Panc1 (cell line): ENCODE measurements at regions of chr17 and their contacts with region 1.

Region 1: DNA sequence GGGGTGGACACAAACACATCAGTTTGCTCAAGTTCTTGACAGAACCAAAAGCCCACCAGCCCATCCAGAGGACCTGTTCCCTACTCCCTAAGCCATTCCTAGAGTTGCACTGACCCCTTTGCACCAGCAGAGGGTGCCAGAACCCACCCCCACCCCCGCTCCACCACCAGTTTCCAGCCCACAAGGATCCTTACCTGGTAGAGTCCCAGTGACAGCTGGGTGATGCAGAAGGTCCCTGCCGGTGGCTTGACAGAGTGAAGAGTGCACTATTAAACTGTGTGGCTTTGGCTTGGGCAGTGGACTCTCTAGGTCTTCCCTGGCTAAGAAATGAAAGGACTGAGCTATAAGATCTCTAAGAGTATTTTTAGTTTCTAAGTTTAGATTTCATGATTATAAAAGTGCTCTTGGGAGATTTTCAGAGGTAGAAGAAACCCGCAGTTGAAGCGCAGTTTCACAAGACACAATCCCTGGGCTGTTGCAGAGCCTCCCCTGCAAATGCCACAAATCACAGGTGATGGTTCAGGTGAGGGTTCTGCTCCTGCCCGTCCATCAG is 73.3 kb upstream of the MTMR4 start:
- DNase-seq: peak; percentile 41
- ATAC-seq: peak; percentile 82
- H3K4me3 ChIP-seq: no peak overlapping the region
- H3K27ac ChIP-seq: no peak overlapping the region
- H3K4me1 ChIP-seq: no peaks in the 10 kb centered on the region
- H3K27me3 ChIP-seq: no peaks in the 10 kb centered on the region; the same call in 1 of the 2 replicates
- CTCF ChIP-seq: peak; percentile 91

Region 2: GRCh38 chr17:58534901-58535421 is 52.8 kb before region 1 on chr17:
- CTCF ChIA-PET with region 1: no interaction called
- POLR2A ChIA-PET with region 1: interaction called, 11 read pairs
- in situ Hi-C with region 1: no loop called
- intact Hi-C with region 1: no loop called
- DNase-seq: no peak
- ATAC-seq: no peak
- H3K4me3 ChIP-seq: no peak overlapping the region
- H3K27ac ChIP-seq: no peak overlapping the region
- H3K4me1 ChIP-seq: peaks cover 3% of the 10 kb centered on the region; the same call in 1 of the 2 replicates
- H3K27me3 ChIP-seq: no peaks in the 10 kb centered on the region
- CTCF ChIP-seq: no peak

Region 3: GRCh38 chr17:58679263-58680037 is 91.7 kb after region 1 on chr17:
- CTCF ChIA-PET with region 1: no interaction called
- POLR2A ChIA-PET with region 1: no interaction called
- in situ Hi-C with region 1: no loop called
- intact Hi-C with region 1: no loop called
- DNase-seq: peak; percentile 75
- ATAC-seq: peak; percentile 91
- H3K4me3 ChIP-seq: no peak overlapping the region
- H3K27ac ChIP-seq: peak overlapping the region; percentile 54; the same call in 1 of the 2 replicates
- H3K4me1 ChIP-seq: peaks cover 9% of the 10 kb centered on the region; the same call in 1 of the 2 replicates
- H3K27me3 ChIP-seq: no peaks in the 10 kb centered on the region
- CTCF ChIP-seq: no peak

Region 4: GRCh38 chr17:58780677-58781076 is 192.9 kb after region 1 on chr17:
- CTCF ChIA-PET with region 1: no interaction called
- POLR2A ChIA-PET with region 1: interaction called, 12 read pairs
- in situ Hi-C with region 1: no loop called
- intact Hi-C with region 1: no loop called
- DNase-seq: no peak
- ATAC-seq: no peak
- H3K4me3 ChIP-seq: no peak overlapping the region
- H3K27ac ChIP-seq: no peak overlapping the region
- H3K4me1 ChIP-seq: no peaks in the 10 kb centered on the region
- H3K27me3 ChIP-seq: no peaks in the 10 kb centered on the region
- CTCF ChIP-seq: no peak

Region 5: DNA sequence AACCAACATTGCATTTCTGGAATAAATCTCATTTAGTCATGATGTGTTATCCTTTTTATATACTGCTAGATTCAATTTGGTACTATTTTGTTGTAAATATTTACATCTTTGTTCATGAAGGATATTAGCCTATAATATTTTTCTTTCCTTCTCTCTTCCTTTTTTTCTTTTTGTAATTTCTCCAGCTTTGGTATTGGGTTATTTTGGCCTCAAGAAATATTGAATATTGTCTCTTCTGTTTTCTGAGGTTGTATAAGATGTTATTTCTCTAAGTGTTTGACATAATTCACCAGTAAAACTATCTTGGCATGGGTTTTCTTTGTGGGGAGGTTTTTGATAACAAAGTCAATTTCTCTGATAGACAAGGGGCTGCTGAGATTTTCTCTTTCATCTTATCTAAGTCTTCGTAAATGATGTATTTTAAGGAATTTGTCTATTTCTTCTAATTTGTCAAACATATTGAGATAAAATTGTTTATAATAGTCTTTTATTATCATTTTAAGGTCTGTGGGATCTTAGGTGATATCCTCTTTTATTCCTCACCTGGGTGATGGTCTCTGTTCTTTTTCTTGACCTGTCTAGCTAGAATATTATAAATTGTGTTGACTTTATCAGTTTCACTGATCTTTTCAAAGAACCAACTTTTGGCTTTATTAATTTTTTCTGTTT is 212.6 kb after region 1 on chr17:
- CTCF ChIA-PET with region 1: no interaction called
- POLR2A ChIA-PET with region 1: no interaction called
- in situ Hi-C with region 1: no loop called
- intact Hi-C with region 1: no loop called
- DNase-seq: no peak
- ATAC-seq: no peak
- H3K4me3 ChIP-seq: no peak overlapping the region
- H3K27ac ChIP-seq: no peak overlapping the region
- H3K4me1 ChIP-seq: no peaks in the 10 kb centered on the region
- H3K27me3 ChIP-seq: no peaks in the 10 kb centered on the region
- CTCF ChIP-seq: no peak